BJ (cell line): ENCODE measurements at regions of chr5 and their contacts with region 1.

Region 1: DNA sequence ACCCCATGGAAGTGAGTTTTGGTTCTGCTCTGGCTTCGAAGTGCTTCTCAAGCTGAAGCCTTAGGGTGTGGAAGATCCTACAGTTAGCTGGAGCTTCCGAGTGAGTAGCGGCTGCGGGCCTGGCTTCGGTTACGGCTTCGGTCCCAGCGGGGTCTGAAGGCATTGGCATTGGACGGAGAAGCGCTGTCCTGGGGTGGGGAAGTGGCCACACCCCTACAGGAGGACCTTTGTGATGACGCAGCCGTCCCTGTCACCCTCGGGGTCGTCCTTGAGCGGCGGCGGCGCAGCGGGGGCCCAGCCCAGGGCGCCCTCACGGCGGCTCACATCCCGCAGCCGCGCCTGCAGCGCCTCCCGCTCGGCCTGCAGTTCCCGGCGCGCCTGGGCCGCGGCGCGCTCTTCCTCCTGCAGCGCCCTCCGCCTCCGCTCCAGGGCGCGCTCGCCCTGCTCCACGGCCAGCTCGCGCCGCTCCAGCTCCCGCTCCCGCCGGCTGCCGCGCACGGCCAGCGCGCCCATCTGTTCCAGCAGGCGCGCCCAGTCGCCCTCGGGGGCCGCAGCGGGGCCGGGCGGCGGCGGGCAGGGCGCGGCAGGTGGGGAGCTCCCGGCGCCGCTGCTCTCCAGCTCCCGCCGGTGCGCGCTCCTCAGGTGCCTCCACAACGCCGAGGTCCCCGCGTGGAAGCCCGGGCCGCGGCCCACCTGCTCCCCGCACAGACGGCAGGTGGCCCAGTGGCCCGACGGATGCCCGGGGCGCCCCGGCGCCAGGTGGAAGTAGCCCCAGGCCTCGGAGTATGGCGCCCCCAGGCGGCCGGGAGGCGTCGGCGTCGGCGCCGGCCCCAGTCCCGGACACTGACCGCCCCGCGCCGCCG is 9.9 kb downstream of the ZBED3 start:
- DNase-seq: no peak
- H3K4me3 ChIP-seq: peak overlapping the region; percentile 22; the same call in 1 of the 2 replicates
- H3K27me3 ChIP-seq: no peaks in the 10 kb centered on the region
- CTCF ChIP-seq: 0 out of 2 replicates have a peak, but pooled peaks have one; percentile 6

Region 2: DNA sequence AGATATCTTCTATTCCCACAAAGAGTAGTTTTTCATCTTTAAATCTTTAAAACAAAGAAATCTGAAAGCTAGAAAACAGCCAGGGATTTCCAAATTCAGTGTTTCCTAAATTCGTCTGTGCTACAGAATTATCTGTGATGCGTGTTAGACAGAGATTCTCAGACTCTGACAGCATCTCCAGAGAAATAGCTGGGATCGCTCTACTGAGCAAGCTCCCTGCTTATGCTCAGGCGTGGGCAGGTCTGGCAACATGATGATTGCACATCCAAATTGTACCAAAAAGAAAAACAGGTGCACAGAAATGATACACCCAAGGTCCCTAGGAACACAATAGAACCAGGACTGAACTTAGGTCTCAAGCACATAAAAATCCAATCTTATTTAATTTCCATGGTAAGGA is 147.1 kb before region 1 on chr5:
- CTCF ChIA-PET with region 1: no interaction called
- POLR2A ChIA-PET with region 1: no interaction called
- DNase-seq: no peak
- H3K4me3 ChIP-seq: no peak overlapping the region
- H3K27me3 ChIP-seq: peaks cover 10% of the 10 kb centered on the region
- CTCF ChIP-seq: no peak

Region 3: GRCh38 chr5:76942581-76942980 is 134.6 kb before region 1 on chr5:
- CTCF ChIA-PET with region 1: no interaction called
- POLR2A ChIA-PET with region 1: no interaction called
- DNase-seq: peak; percentile 55
- H3K4me3 ChIP-seq: no peak overlapping the region
- H3K27me3 ChIP-seq: no peaks in the 10 kb centered on the region; the same call in 1 of the 2 replicates
- CTCF ChIP-seq: no peak

Region 4: GRCh38 chr5:77066823-77067442 is 10.3 kb before region 1 on chr5:
- CTCF ChIA-PET with region 1: interaction called, 13 read pairs
- POLR2A ChIA-PET with region 1: no interaction called
- DNase-seq: no peak
- H3K4me3 ChIP-seq: no peak overlapping the region
- H3K27me3 ChIP-seq: no peaks in the 10 kb centered on the region
- CTCF ChIP-seq: no peak